ENCODE measurements at regions of chr12 and their contacts with region 1.

Region 1: DNA sequence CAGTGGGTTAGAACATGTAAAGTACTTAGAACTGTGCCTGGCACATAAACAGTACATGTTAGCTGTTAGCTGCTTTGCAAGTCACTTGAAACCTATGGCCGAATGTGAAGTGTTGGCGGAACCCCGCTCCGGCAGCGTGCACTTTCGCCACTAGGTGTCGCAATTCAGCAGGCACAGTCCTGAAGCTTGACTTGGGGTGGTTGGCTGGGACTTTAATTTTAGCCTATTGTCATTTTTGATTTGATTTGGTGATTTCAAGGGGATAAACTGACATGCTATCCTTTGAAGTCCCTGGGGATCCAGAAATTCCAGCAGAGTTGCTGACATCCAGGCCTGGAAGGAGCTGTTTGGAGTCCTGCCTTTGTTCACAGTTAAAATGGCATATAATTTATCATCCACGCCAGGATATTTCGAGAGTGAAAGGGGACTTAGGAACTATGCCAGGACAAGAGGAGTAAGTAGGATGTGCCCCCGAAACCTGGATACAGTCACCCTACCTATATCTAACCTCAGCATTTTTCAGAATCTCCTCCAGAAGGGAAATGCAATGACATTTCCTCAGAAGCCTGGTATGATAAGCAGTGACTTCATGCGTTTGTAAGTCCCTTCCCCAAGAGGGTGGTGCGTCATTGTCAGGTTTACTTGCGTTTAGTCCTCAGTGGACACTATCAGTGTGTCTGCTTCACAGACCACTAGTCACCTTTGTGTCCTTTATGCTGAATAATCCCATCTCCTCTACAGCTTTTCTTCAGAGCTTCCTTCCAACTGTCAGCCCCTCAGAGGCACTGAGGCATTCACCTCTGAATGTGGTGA is 3.5 kb upstream of the TSPAN9 start:
- DNase-seq: peak in 1 of 2 donors; percentile 92
- H3K4me3 ChIP-seq: no peak overlapping the region
- H3K27ac ChIP-seq: peak overlapping the region; percentile 47 to 65
- H3K4me1 ChIP-seq: peaks cover 6 to 23% of the 10 kb centered on the region in 2 donors
- H3K27me3 ChIP-seq: no peaks in the 10 kb centered on the region
- CTCF ChIP-seq: peak; percentile 74 to 98 (median 97)

Region 2: GRCh38 chr12:3034067-3034750 is 39.4 kb before region 1 on chr12:
- intact Hi-C with region 1: no loop called
- DNase-seq: no peak
- H3K4me3 ChIP-seq: no peak overlapping the region
- H3K27ac ChIP-seq: no peak overlapping the region
- H3K4me1 ChIP-seq: no peaks in the 10 kb centered on the region
- H3K27me3 ChIP-seq: no peaks in the 10 kb centered on the region
- CTCF ChIP-seq: peak; percentile 53 to 70 (median 62)

Region 3: GRCh38 chr12:3097186-3097804 is 23.7 kb after region 1 on chr12:
- intact Hi-C with region 1: loop called (anchors 1 kb)
- DNase-seq: peak; percentile 39 to 92
- H3K4me3 ChIP-seq: peak overlapping the region; percentile 35 to 56
- H3K27ac ChIP-seq: peak overlapping the region; percentile 85 to 93
- H3K4me1 ChIP-seq: peaks cover 0 to 25% of the 10 kb centered on the region in 2 donors
- H3K27me3 ChIP-seq: no peaks in the 10 kb centered on the region
- CTCF ChIP-seq: no peak

Region 4: GRCh38 chr12:3107954-3108353 is 34.3 kb after region 1 on chr12:
- intact Hi-C with region 1: no loop called
- DNase-seq: no peak
- H3K4me3 ChIP-seq: no peak overlapping the region
- H3K27ac ChIP-seq: no peak overlapping the region
- H3K4me1 ChIP-seq: no peaks in the 10 kb centered on the region
- H3K27me3 ChIP-seq: no peaks in the 10 kb centered on the region
- CTCF ChIP-seq: no peak

Region 5: DNA sequence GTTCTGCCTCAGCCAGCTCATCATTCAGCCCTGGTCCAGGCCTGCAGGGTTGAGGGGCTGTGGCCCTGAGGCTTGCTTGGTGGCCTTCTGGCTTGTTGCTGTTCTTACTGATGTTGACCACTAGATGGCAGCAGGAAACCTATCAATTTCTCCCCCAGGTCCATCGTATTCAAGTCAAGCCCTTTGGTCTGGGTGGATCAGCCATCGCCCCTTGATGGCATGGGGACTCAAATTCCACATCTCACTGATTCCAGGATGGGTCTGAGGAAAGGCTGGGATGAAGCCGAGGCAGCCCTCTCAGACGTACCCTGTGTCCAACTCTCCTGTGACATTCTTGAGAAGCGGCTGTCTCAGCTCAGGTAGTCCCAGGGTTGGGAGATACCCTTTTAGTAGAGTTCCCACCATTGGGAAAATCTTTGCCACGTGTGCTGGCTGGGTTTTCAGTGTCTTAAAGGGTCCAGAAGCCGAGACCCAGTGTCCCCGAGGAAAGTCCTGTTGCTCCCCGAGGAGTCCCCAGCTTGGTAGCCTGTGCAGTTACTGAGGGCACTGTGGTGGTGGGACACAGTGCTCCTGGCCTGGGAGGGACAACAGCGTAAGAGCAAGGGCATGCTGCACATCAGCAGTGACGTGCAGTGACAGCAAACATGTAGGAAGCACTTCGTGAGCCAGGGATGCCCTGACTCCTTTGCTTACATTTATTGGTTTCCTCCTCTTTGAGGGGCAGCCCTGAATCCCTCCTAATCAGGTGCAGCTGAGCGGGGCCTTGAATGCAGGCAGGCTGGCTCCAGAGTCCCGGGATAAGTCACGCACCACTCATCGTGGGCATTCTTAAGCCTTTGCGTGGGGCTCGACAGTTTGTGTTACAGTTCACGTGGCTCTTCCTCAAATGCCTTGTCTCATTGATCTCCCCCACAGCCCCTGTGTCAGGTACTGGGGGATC is 62.1 kb after region 1 on chr12:
- intact Hi-C with region 1: loop called (anchors 2 kb)
- DNase-seq: no peak
- H3K4me3 ChIP-seq: no peak overlapping the region
- H3K27ac ChIP-seq: no peak overlapping the region
- H3K4me1 ChIP-seq: peaks cover 0 to 35% of the 10 kb centered on the region in 2 donors
- H3K27me3 ChIP-seq: no peaks in the 10 kb centered on the region
- CTCF ChIP-seq: peak; percentile 78 to 85 (median 82)

Region 6: GRCh38 chr12:3218228-3219171 is 144.9 kb after region 1 on chr12:
- intact Hi-C with region 1: loop called (anchors 5 kb)
- DNase-seq: peak; percentile 76 to 92
- H3K4me3 ChIP-seq: peak overlapping the region in 1 of 2 donors; percentile 12
- H3K27ac ChIP-seq: peak overlapping the region; percentile 90 to 95
- H3K4me1 ChIP-seq: peaks cover 17 to 31% of the 10 kb centered on the region in 2 donors
- H3K27me3 ChIP-seq: no peaks in the 10 kb centered on the region
- CTCF ChIP-seq: no peak

Region 7: GRCh38 chr12:3275171-3276041 is 201.8 kb after region 1 on chr12:
- intact Hi-C with region 1: loop called (anchors 1 kb)
- DNase-seq: peak in 1 of 2 donors; percentile 88
- H3K4me3 ChIP-seq: no peak overlapping the region
- H3K27ac ChIP-seq: no peak overlapping the region
- H3K4me1 ChIP-seq: no peaks in the 10 kb centered on the region
- H3K27me3 ChIP-seq: no peaks in the 10 kb centered on the region
- CTCF ChIP-seq: peak; percentile 95 to 96 (median 96)

Region 8: GRCh38 chr12:4276524-4277204 is 1203.0 kb after region 1 on chr12:
- intact Hi-C with region 1: loop called (anchors 5 kb)
- DNase-seq: peak; percentile 63 to 95
- H3K4me3 ChIP-seq: peak overlapping the region; percentile 78 to 87
- H3K27ac ChIP-seq: peak overlapping the region; percentile 92 to 96
- H3K4me1 ChIP-seq: peaks cover 12 to 50% of the 10 kb centered on the region in 2 donors
- H3K27me3 ChIP-seq: no peaks in the 10 kb centered on the region
- CTCF ChIP-seq: peak; percentile 90 to 96 (median 92)